Natural killer cell (primary cell): ENCODE measurements at regions of chr2 and their contacts with region 1.

Region 1: GRCh38 chr2:223944703-223945531 is at the start of gene WDFY1:
- DNase-seq: peak; percentile 72 to 85
- ATAC-seq: peak; percentile 73 to 92 (median 85)
- H3K4me3 ChIP-seq: peak within 1 kb of the TSS; percentile 85
- H3K4me3 Mint-ChIP-seq: peak within 1 kb of the TSS; percentile 95
- H3K27ac ChIP-seq: peak within 1 kb of the TSS; percentile 61
- H3K27ac Mint-ChIP-seq: peak within 1 kb of the TSS; percentile 81 to 93
- H3K4me1 ChIP-seq: peaks cover 44% of the 10 kb centered on the region
- H3K4me1 Mint-ChIP-seq: peaks cover 41 to 44% of the 10 kb centered on the region in 2 donors
- H3K27me3 ChIP-seq: no peaks in the 10 kb centered on the region
- H3K27me3 Mint-ChIP-seq: no peaks in the 10 kb centered on the region
- CTCF ChIP-seq: no peak
- total RNA-seq, gene WDFY1: 90.2 to 96.2 (median 92.0) TPM

Region 2: GRCh38 chr2:223837287-223838061 is 107.4 kb before region 1 on chr2 and contains the start of gene AP1S3:
- intact Hi-C with region 1: loop called (anchors 5 kb)
- DNase-seq: peak; percentile 76 to 91
- ATAC-seq: peak; percentile 88 to 92 (median 89)
- H3K4me3 ChIP-seq: peak within 1 kb of the TSS; percentile 65
- H3K4me3 Mint-ChIP-seq: peak within 1 kb of the TSS; percentile 92
- H3K27ac ChIP-seq: peak within 1 kb of the TSS; percentile 74
- H3K27ac Mint-ChIP-seq: peak within 1 kb of the TSS; percentile 84 to 86
- H3K4me1 ChIP-seq: peaks cover 21% of the 10 kb centered on the region
- H3K4me1 Mint-ChIP-seq: peaks cover 12 to 15% of the 10 kb centered on the region in 2 donors
- H3K27me3 ChIP-seq: no peaks in the 10 kb centered on the region
- H3K27me3 Mint-ChIP-seq: no peaks in the 10 kb centered on the region
- CTCF ChIP-seq: no peak
- total RNA-seq, gene AP1S3: 4.5 to 5.2 (median 5.0) TPM

Region 3: GRCh38 chr2:223930103-223930976 is 14.6 kb before region 1 on chr2:
- intact Hi-C with region 1: loop called (anchors 1 kb)
- DNase-seq: peak in 1 of 2 donors; percentile 16
- ATAC-seq: peak in 2 of 3 donors; percentile 30 to 51
- H3K4me3 ChIP-seq: no peak overlapping the region
- H3K4me3 Mint-ChIP-seq: peak overlapping the region; percentile 40
- H3K27ac ChIP-seq: peak overlapping the region; percentile 53
- H3K27ac Mint-ChIP-seq: peak overlapping the region; percentile 74 to 77
- H3K4me1 ChIP-seq: peaks cover 45% of the 10 kb centered on the region
- H3K4me1 Mint-ChIP-seq: peaks cover 54 to 67% of the 10 kb centered on the region in 2 donors
- H3K27me3 ChIP-seq: no peaks in the 10 kb centered on the region
- H3K27me3 Mint-ChIP-seq: no peaks in the 10 kb centered on the region
- CTCF ChIP-seq: no peak

Region 4: GRCh38 chr2:223957092-223957851 is 12.4 kb after region 1 on chr2 and contains the start of gene MRPL44:
- intact Hi-C with region 1: loop called (anchors 1 kb)
- DNase-seq: peak; percentile 98
- ATAC-seq: peak; percentile 99 to 100 (median 100)
- H3K4me3 ChIP-seq: peak within 1 kb of the TSS; percentile 97
- H3K4me3 Mint-ChIP-seq: peak within 1 kb of the TSS; percentile 97
- H3K27ac ChIP-seq: peak within 1 kb of the TSS; percentile 79
- H3K27ac Mint-ChIP-seq: peak within 1 kb of the TSS; percentile 93 to 95
- H3K4me1 ChIP-seq: peaks cover 16% of the 10 kb centered on the region
- H3K4me1 Mint-ChIP-seq: peaks cover 46 to 56% of the 10 kb centered on the region in 2 donors
- H3K27me3 ChIP-seq: no peaks in the 10 kb centered on the region
- H3K27me3 Mint-ChIP-seq: no peaks in the 10 kb centered on the region
- CTCF ChIP-seq: no peak
- total RNA-seq, gene MRPL44: 27.6 to 35.1 (median 31.0) TPM

Region 5: DNA sequence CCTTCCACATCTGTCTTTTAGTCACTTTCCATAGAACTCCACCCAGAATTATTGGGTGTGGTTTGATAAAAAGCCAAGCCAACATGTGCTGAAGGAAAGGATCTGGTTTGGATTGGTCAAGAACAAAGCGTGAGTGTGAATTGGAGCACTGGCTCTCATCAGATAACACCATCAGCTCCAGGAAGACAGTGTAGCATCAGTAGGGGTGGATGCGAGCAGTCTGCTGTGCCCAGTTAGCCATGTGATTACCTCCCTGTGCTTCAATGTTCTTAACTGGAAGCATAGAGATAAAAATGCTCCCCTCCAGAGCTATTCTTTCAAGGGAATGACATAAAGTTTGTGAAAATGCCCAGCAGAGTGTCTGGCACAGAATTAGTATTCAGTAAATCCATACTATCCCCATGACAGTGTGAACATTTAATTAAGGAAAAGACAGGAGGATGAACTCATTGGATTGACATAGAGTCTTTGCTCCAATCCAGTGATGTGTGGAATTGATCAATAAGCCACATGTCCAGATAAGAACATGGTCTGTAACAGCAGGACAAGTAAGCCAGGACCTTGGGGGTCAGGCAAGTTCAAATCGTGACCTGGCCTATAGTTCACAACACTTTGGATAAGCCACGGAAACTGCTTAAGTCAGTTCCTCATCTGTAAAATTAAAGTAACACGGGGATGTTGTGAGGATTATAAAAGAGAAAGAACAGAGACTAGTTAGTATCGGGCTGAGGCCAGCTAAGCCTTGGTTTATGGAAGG is 389.0 kb after region 1 on chr2:
- intact Hi-C with region 1: no loop called
- DNase-seq: no peak
- ATAC-seq: no peak
- H3K4me3 ChIP-seq: no peak overlapping the region
- H3K4me3 Mint-ChIP-seq: no peak overlapping the region
- H3K27ac ChIP-seq: no peak overlapping the region
- H3K27ac Mint-ChIP-seq: no peak overlapping the region
- H3K4me1 ChIP-seq: no peaks in the 10 kb centered on the region
- H3K4me1 Mint-ChIP-seq: no peaks in the 10 kb centered on the region
- H3K27me3 ChIP-seq: no peaks in the 10 kb centered on the region
- H3K27me3 Mint-ChIP-seq: no peaks in the 10 kb centered on the region
- CTCF ChIP-seq: no peak